Activated CD4-positive, alpha-beta memory T cell treated with anti-CD3 and anti-CD28 coated beads, Interleukin-2, amount 10 ng/mL, durations not matched to agents 7 days and 5 days (primary cell): ENCODE measurements at regions of chr5 and their contacts with region 1.

Region 1: DNA sequence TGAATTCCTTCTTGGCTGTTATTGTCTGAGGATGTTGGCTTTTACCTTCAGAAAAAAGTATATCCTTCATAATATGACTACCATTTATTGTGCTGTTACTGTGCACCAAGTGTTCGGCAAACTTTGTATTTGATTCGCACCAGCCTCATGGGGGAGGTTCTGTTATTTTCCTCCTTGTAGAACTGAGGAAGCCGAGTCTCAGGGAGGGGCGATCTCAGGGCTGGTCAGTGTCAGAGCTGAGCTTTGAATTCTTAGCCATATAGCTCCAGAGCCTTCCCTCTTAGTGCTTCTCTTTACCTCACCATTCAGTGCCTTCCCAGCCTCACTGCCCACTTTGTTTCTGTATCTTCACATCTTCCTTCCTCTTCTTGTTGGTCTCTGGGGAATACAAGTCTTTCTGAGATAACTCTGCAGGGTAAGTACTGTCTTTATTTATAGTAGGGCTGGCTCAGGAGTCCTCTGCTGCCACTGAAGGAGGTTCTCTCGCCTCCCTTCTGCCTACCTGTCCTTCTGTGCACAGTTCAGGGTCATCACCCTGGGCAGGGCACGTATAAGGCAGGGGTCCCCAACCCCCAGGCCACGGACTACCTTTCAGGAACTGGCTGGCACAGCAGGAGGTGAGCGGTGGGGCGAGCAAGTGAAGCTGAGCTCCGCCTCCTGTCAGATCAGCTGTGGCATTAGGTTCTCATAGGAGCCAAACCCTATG is 48.4 kb downstream of the GALNT10 start:
- DNase-seq: no peak
- H3K4me3 Mint-ChIP-seq: no peak overlapping the region
- H3K27ac Mint-ChIP-seq: no peak overlapping the region
- H3K4me1 Mint-ChIP-seq: peaks cover 26% of the 10 kb centered on the region
- H3K27me3 Mint-ChIP-seq: no peaks in the 10 kb centered on the region

Region 2: GRCh38 chr5:154179846-154180710 is 58.9 kb before region 1 on chr5:
- CTCF ChIA-PET with region 1: interaction called, 10 read pairs
- POLR2A ChIA-PET with region 1: no interaction called
- DNase-seq: peak; percentile 42
- H3K4me3 Mint-ChIP-seq: no peak overlapping the region
- H3K27ac Mint-ChIP-seq: no peak overlapping the region
- H3K4me1 Mint-ChIP-seq: peaks cover 21% of the 10 kb centered on the region
- H3K27me3 Mint-ChIP-seq: peaks cover 16% of the 10 kb centered on the region

Region 3: DNA sequence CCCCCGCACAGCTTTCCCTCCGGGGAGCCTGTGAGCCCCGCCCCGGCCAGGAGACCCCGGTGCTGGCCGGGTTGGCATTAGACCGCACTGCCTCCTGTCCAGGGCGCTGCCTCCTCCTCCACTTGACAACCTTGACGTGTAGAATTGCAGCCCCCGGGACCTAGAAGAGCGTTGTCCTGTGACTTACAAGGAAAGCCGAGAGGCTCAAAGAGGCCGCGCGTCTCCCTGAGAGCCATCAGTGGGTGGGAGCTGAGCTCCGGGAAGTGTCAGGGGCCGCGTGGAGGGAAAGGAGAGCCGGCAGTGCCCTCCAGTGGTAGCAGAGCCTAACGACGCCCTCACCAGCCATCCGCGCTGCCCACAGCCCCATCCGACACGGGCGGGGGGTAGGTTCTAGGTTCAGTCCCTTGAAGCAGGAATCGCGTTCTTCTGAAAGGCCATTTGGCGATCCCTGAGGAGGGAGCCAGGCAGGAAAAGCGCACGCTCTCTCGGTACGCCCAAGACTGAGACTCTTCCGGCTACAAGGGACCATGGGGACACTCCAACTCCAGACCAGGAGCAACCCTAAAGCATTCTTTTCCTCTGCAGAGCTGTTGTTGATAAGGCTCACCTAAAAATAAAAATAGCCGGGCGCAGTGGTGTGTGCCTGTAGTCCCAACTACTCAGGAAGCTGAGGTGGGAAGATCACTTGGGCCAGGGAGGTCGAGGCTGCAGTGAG is 166.3 kb after region 1 on chr5:
- CTCF ChIA-PET with region 1: interaction called, 13 read pairs
- POLR2A ChIA-PET with region 1: no interaction called
- DNase-seq: peak; percentile 77
- H3K4me3 Mint-ChIP-seq: no peak overlapping the region
- H3K27ac Mint-ChIP-seq: no peak overlapping the region
- H3K4me1 Mint-ChIP-seq: peaks cover 8% of the 10 kb centered on the region
- H3K27me3 Mint-ChIP-seq: no peaks in the 10 kb centered on the region